Calu3 (cell line): ENCODE measurements at regions of chr5 and their contacts with region 1.

Region 1: GRCh38 chr5:128674825-128675446 is 136.9 kb upstream of the FBN2 start:
- DNase-seq: peak; percentile 76
- H3K4me3 Mint-ChIP-seq: no peak overlapping the region
- H3K27ac Mint-ChIP-seq: no peak overlapping the region
- H3K4me1 Mint-ChIP-seq: peaks cover 15% of the 10 kb centered on the region
- H3K27me3 Mint-ChIP-seq: no peaks in the 10 kb centered on the region
- CTCF ChIP-seq: peak; percentile 55

Region 2: GRCh38 chr5:128436749-128437188 is 238.2 kb before region 1 on chr5:
- CTCF ChIA-PET with region 1: no interaction called
- intact Hi-C with region 1: no loop called
- DNase-seq: peak; percentile 14
- H3K4me3 Mint-ChIP-seq: no peak overlapping the region
- H3K27ac Mint-ChIP-seq: no peak overlapping the region
- H3K4me1 Mint-ChIP-seq: peaks cover 8% of the 10 kb centered on the region
- H3K27me3 Mint-ChIP-seq: no peaks in the 10 kb centered on the region
- CTCF ChIP-seq: no peak

Region 3: DNA sequence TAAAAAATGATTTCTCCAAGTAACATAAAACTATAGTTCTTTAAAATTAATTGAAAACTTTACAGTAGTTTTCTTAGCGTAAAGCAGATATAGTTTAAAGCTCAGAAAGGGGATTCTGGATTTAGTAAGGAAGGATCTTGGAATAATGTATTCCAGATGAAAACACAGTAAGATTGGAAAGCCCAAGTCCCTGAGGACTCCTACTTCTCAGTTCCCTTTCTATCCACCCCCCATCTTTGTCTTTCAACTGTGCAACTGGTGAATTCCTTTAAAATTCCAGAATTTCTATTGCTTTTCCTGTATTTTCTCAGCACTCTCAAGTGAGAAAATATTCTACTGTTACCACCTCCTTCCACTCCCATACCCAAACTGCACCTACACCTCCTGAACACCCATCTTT is 47.6 kb after region 1 on chr5:
- CTCF ChIA-PET with region 1: no interaction called
- intact Hi-C with region 1: no loop called
- DNase-seq: no peak
- H3K4me3 Mint-ChIP-seq: no peak overlapping the region
- H3K27ac Mint-ChIP-seq: no peak overlapping the region
- H3K4me1 Mint-ChIP-seq: no peaks in the 10 kb centered on the region
- H3K27me3 Mint-ChIP-seq: no peaks in the 10 kb centered on the region
- CTCF ChIP-seq: no peak

Region 4: DNA sequence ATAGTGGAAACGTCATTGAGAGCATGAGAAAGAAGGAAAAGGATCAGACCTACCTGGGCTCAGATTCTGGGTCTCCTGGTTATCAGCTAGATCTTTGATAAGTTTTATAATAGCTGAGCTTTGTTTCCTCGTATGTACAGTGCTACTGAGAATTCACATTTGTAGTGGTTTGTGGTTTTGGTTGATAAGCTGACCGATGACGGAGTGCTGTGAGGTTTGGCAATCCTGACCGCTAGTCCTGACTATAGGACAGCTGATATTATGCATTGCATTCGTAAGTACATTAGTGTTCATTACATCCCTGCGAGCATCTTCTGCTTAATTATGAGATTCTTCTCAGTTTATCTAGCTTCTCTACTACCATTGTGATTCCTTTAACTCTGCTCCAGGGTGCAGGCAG is 99.7 kb after region 1 on chr5:
- CTCF ChIA-PET with region 1: no interaction called
- intact Hi-C with region 1: loop called (anchors 5 kb)
- DNase-seq: peak; percentile 68
- H3K4me3 Mint-ChIP-seq: no peak overlapping the region
- H3K27ac Mint-ChIP-seq: no peak overlapping the region
- H3K4me1 Mint-ChIP-seq: no peaks in the 10 kb centered on the region
- H3K27me3 Mint-ChIP-seq: peaks cover 96% of the 10 kb centered on the region
- CTCF ChIP-seq: no peak

Region 5: DNA sequence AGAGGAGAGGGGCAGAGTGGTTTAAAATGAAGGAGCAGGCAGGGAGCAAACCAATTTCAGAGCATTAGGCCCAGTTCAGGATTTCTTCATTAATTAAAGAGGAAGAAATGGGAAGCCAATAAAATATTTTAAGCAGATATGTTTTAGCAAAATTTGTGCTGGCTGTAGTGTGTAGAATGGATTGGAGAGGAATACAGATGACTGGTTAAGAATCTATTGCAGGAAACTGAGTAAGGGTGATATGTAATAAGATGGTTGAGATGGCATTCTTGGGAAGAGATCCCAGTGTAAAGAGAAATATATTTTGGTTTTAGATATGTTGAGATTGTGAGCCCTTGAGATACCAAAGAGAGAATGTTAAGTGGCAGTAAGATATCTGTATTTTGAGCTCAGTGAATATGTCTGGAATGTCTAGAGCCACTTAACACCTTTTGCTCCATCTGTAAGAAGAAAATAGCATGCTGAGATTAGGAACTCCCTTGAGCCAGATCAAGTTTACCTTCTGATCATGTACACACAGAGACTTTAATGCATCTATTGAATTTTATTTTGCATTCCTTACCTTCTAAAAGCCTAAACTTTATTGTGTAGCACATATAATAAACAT is 210.8 kb after region 1 on chr5:
- CTCF ChIA-PET with region 1: no interaction called
- intact Hi-C with region 1: no loop called
- DNase-seq: no peak
- H3K4me3 Mint-ChIP-seq: no peak overlapping the region
- H3K27ac Mint-ChIP-seq: no peak overlapping the region
- H3K4me1 Mint-ChIP-seq: no peaks in the 10 kb centered on the region
- H3K27me3 Mint-ChIP-seq: peaks cover 4% of the 10 kb centered on the region
- CTCF ChIP-seq: no peak